ENCODE measurements at regions of chr9 and their contacts with region 1.

Region 1: DNA sequence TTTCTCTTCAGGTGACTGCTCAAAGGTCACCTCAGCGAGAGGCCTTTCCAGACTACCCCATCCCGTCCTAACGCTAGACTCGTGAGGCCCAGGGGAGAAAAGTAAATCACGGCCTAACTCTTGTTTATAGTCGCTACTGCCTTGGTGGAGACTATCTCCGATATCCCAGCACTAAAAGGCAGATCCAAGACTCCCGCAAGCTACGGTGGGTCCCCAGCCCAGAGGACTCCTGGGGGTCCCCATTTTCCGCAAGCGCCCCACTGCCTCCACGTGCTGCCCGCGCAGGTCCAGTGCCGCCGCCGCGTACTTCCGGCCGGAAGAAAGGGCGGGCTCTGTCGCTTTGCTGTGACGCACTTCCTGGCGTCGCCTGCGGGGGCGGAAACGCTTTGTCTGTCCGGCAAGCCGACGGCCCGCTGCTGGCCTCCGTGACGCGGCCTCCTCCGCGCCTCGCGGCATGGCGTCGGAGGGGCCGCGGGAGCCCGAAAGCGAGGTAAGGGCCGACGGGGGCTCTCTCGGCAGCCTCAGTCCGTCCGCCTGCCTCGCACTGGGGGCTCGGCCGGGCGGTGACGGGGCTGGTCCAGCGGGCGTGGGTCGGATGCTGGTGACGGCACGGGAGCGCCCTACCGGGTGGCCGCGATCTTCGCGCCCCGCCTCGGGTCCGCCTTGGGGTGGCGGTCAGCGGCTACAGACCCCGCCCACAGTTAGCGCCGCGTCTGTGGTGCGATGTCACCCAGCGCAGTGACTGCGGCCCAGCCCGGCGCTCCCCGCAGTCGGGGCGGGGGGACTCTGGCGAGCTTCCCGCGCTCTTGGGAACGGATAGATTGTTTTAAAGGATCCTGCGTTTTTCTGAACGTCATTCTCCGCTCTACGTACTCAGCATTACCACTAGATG is at the start of gene SECISBP2:
- DNase-seq: peak; percentile 97
- ATAC-seq: peak; percentile 97
- H3K4me3 ChIP-seq: peak within 1 kb of the TSS; percentile 79
- H3K27ac ChIP-seq: peak within 1 kb of the TSS; percentile 95
- H3K4me1 ChIP-seq: peaks cover 3% of the 10 kb centered on the region
- H3K27me3 ChIP-seq: no peaks in the 10 kb centered on the region
- CTCF ChIP-seq: peak; percentile 88
- POLR2A ChIP-seq: peak; percentile 98
- RAD21 ChIP-seq: peak; percentile 58
- total RNA-seq, gene SECISBP2: 18.8 and 19.7 TPM in 2 replicates

Region 2: GRCh38 chr9:87713278-87713987 is 1604.9 kb before region 1 on chr9:
- CTCF ChIA-PET with region 1: no interaction called
- POLR2A ChIA-PET with region 1: no interaction called
- dilution Hi-C with region 1: no loop called
- in situ Hi-C with region 1: no loop called
- intact Hi-C with region 1: loop called (anchors 10 kb)
- DNase-seq: peak; percentile 99
- ATAC-seq: peak; percentile 87
- H3K4me3 ChIP-seq: peak overlapping the region; percentile 3; the same call in 1 of the 2 replicates
- H3K27ac ChIP-seq: peak overlapping the region; percentile 98
- H3K4me1 ChIP-seq: peaks cover 16% of the 10 kb centered on the region
- H3K27me3 ChIP-seq: no peaks in the 10 kb centered on the region
- CTCF ChIP-seq: 0 out of 2 replicates have a peak, but pooled peaks have one; percentile 8
- POLR2A ChIP-seq: peak; percentile 84
- RAD21 ChIP-seq: no peak

Region 3: DNA sequence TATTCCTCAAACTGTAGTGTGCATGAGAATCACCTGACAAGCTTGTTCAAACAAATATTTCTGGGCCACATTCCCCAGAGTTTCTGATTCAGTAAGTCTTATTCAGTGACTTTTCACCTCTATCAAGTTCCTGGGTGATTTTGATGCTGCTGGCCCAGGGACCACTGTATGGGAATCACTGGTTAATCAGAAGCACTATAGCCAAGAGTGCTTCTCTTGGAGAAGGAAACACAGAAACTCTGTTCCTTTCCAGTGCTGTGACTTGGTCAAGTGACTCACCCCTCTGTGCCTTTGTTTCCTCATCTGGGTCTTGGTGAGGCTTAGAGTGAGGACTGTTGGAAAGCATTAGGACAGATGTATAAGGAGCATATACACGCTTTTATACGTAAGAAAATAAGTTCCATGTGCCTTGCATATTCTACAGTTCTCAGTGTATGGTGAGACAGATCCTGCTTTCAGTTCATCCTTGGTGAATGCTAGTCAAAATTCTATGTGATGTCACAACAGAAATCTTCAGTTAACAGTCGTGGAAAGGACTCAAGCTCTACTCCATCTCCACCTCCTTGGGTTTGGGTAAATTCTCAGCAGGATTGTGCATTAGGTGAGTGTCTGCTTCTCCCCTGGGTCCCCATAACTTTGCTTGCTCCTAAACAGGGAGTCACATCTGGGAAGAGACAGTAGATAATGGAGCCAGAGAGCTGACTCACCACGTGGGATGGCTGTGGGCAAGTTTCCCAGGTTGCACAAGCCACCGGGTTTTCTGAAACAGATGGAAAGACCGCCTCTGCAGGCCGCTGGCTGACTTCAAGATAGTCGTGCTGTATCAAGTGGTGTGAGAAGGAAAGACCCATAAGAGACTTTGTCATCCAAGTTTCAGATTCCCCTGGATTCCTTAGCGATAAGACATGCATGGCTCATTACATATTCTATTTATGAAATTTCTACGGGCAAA is 666.4 kb before region 1 on chr9:
- CTCF ChIA-PET with region 1: no interaction called
- POLR2A ChIA-PET with region 1: no interaction called
- dilution Hi-C with region 1: no loop called
- in situ Hi-C with region 1: no loop called
- intact Hi-C with region 1: loop called (anchors 10 kb)
- DNase-seq: peak; percentile 99
- ATAC-seq: peak; percentile 89
- H3K4me3 ChIP-seq: no peak overlapping the region; the same call in 1 of the 2 replicates
- H3K27ac ChIP-seq: peak overlapping the region; percentile 89
- H3K4me1 ChIP-seq: peaks cover 17% of the 10 kb centered on the region
- H3K27me3 ChIP-seq: no peaks in the 10 kb centered on the region
- CTCF ChIP-seq: peak; percentile 54
- POLR2A ChIP-seq: peak; percentile 51
- RAD21 ChIP-seq: peak; percentile 44

Region 4: DNA sequence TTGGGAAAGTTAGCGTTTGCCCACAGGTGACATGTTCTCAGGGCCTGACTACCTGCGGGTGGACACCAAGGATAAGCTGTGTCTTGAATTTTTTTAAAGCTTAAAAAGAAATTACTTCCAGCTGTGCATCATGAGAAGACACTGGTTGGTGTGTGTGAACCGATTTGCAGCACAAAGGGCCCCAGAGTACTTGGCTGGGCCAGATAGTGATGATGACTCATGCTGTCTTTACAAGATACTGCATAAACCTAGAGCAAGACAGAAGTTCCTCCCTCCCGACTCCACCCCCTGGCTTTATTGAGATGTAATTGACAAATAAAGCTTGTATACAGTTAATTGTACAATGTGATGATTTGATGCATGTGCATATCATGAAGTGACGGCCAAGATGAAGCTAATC is 570.6 kb before region 1 on chr9:
- CTCF ChIA-PET with region 1: no interaction called
- POLR2A ChIA-PET with region 1: no interaction called
- dilution Hi-C with region 1: no loop called
- in situ Hi-C with region 1: no loop called
- intact Hi-C with region 1: loop called (anchors 10 kb)
- DNase-seq: peak; percentile 96
- ATAC-seq: peak; percentile 50
- H3K4me3 ChIP-seq: no peak overlapping the region
- H3K27ac ChIP-seq: peak overlapping the region; percentile 93
- H3K4me1 ChIP-seq: peaks cover 35% of the 10 kb centered on the region
- H3K27me3 ChIP-seq: no peaks in the 10 kb centered on the region
- CTCF ChIP-seq: no peak
- POLR2A ChIP-seq: no peak
- RAD21 ChIP-seq: peak; percentile 10; the same call in 1 of the 2 replicates

Region 5: GRCh38 chr9:88781628-88782391 is 536.6 kb before region 1 on chr9:
- CTCF ChIA-PET with region 1: no interaction called
- POLR2A ChIA-PET with region 1: no interaction called
- dilution Hi-C with region 1: no loop called
- in situ Hi-C with region 1: no loop called
- intact Hi-C with region 1: loop called (anchors 10 kb)
- DNase-seq: peak; percentile 74
- ATAC-seq: peak; percentile 80
- H3K4me3 ChIP-seq: no peak overlapping the region
- H3K27ac ChIP-seq: peak overlapping the region; percentile 44; the same call in 1 of the 2 replicates
- H3K4me1 ChIP-seq: peaks cover 26% of the 10 kb centered on the region
- H3K27me3 ChIP-seq: no peaks in the 10 kb centered on the region
- CTCF ChIP-seq: peak; percentile 53
- POLR2A ChIP-seq: no peak
- RAD21 ChIP-seq: peak; percentile 64

Region 6: GRCh38 chr9:89549031-89549644 is 230.8 kb after region 1 on chr9:
- CTCF ChIA-PET with region 1: interaction called, 9 read pairs
- POLR2A ChIA-PET with region 1: interaction called, 3 read pairs
- dilution Hi-C with region 1: no loop called
- in situ Hi-C with region 1: no loop called
- intact Hi-C with region 1: loop called (anchors 1 kb)
- DNase-seq: peak; percentile 59
- ATAC-seq: peak; percentile 99
- H3K4me3 ChIP-seq: no peak overlapping the region
- H3K27ac ChIP-seq: no peak overlapping the region
- H3K4me1 ChIP-seq: no peaks in the 10 kb centered on the region
- H3K27me3 ChIP-seq: peaks cover 7% of the 10 kb centered on the region
- CTCF ChIP-seq: peak; percentile 88
- POLR2A ChIP-seq: no peak
- RAD21 ChIP-seq: peak; percentile 84